ENCODE measurements at regions of chr1 and their contacts with region 1.

Region 1: GRCh38 chr1:153494976-153495535 is 34.6 kb upstream of the S100A7 start:
- DNase-seq: peak; percentile 78
- ATAC-seq: peak; percentile 76
- H3K4me3 Mint-ChIP-seq: no peak overlapping the region
- H3K27ac Mint-ChIP-seq: no peak overlapping the region
- H3K4me1 Mint-ChIP-seq: no peaks in the 10 kb centered on the region
- H3K27me3 Mint-ChIP-seq: peaks cover 31% of the 10 kb centered on the region

Region 2: GRCh38 chr1:153352523-153352922 is 142.5 kb before region 1 on chr1:
- CTCF ChIA-PET with region 1: interaction called, 126 read pairs
- DNase-seq: peak; percentile 73
- ATAC-seq: peak; percentile 78
- H3K4me3 Mint-ChIP-seq: no peak overlapping the region
- H3K27ac Mint-ChIP-seq: no peak overlapping the region
- H3K4me1 Mint-ChIP-seq: peaks cover 4% of the 10 kb centered on the region
- H3K27me3 Mint-ChIP-seq: peaks cover 26% of the 10 kb centered on the region

Region 3: DNA sequence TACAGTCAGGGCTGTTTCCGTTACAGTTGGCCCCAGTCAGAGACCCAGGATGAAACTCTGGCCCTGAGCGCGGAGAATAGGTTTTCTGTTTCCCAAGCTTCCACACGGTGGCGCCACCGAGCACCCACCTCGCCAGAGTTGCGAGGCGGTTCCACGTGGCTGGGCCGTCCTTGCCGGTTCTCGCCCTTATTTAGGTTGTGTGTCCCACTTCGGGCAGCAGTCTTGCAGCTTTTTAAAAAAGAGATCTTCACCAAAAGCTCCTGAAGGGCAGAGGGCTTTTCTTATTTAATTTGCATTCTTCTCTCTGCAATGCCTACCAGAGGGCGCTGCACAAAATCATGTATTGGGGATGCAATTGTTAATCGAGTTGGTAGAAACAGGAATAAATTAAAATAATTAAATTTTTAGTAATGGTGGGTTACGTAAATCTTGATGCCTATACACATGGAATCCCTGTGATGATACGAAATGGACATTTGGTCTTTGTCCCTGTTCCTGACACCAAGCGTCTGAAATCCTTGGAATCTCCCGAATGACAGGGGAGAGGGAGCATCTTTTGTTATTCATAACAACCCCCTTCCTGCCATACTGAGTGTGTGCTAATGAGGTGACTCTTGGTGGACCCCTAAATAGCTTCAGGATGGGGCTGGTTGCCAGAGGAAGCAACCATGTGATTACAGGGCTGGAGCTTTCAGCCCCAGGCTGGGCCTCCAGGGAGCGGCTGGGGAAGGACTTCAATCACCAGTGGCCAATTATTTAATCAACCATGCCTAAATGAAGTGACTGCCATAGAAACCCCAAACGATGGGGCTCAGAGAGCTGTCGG is 29.0 kb before region 1 on chr1:
- CTCF ChIA-PET with region 1: interaction called, 22 read pairs
- DNase-seq: peak; percentile 71
- ATAC-seq: peak; percentile 64
- H3K4me3 Mint-ChIP-seq: no peak overlapping the region
- H3K27ac Mint-ChIP-seq: no peak overlapping the region
- H3K4me1 Mint-ChIP-seq: peaks cover 10% of the 10 kb centered on the region
- H3K27me3 Mint-ChIP-seq: peaks cover 45% of the 10 kb centered on the region